ENCODE measurements at regions of chr12 and their contacts with region 1.

Region 1: GRCh38 chr12:65878544-65878943 is 54.3 kb downstream of the HMGA2 start:
- DNase-seq: peak; percentile 59
- ATAC-seq: peak; percentile 6; the same call in 1 of the 2 replicates
- H3K4me3 ChIP-seq: no peak overlapping the region
- H3K27ac ChIP-seq: peak overlapping the region; percentile 31
- H3K4me1 ChIP-seq: peaks cover 61% of the 10 kb centered on the region
- H3K27me3 ChIP-seq: no peaks in the 10 kb centered on the region
- CTCF ChIP-seq: peak; percentile 43; the same call in 1 of the 2 replicates

Region 2: DNA sequence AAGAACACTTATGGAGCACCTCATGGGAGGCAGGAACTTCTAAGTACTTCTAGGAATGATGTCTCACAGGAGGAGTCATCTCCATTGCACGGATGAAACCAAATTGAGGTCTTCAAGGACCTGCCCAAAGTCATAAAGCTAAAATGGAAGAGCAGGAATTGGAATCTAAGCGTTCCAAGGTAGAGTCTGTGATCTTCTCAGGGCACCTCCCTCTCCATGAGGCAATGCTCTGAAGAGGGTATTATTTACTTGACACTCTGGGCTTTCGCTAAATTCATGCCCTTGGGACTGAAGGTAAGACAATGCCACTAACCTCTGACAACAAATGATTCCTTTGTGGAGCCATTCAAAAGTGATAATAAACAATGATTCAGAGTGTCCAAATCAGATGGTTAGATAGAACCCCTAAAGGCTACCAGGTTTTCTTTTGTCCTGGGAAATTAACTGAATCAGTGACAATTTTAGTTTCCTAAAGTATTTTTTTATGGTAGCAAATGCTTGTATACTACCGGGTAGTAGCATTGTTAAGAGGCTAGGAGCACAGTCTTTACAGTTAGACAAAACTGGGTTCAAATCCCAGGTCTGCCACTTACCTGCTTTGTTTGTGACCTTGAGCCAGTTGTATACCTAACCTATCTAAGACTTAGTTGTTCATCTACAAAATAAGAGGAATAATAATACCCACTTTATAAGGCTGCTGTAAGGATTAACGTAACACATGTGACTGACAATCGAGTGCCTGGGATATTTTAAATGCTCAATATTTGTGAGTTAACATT is 41.9 kb before region 1 on chr12:
- CTCF ChIA-PET with region 1: no interaction called
- POLR2A ChIA-PET with region 1: no interaction called
- intact Hi-C with region 1: loop called (anchors 5 kb)
- DNase-seq: peak; percentile 67
- ATAC-seq: peak; percentile 36
- H3K4me3 ChIP-seq: no peak overlapping the region
- H3K27ac ChIP-seq: peak overlapping the region; percentile 39
- H3K4me1 ChIP-seq: peaks cover 25% of the 10 kb centered on the region
- H3K27me3 ChIP-seq: no peaks in the 10 kb centered on the region
- CTCF ChIP-seq: no peak

Region 3: DNA sequence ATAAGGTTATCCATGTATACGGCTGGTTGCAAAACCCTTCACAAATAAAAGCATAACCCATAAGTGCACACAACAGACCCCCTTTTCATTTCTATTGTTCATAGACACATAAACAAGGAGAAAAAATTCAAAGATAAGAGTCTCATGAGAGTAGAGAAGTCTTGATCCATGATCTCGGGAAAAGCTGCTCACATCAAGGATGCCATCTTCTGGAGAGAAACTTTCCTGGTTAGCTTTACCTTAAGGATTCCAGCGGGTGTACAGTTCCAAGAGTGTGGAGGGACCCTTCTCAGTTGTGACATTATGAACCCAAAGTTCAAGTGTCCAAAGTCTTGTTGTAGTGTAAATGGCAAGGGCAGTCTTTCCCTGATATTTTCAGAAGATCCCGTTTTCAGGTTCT is 107.5 kb after region 1 on chr12:
- CTCF ChIA-PET with region 1: no interaction called
- POLR2A ChIA-PET with region 1: no interaction called
- intact Hi-C with region 1: loop called (anchors 5 kb)
- DNase-seq: no peak
- ATAC-seq: no peak
- H3K4me3 ChIP-seq: no peak overlapping the region
- H3K27ac ChIP-seq: no peak overlapping the region
- H3K4me1 ChIP-seq: no peaks in the 10 kb centered on the region
- H3K27me3 ChIP-seq: no peaks in the 10 kb centered on the region
- CTCF ChIP-seq: no peak